Dendritic cell treated with granulocyte-macrophage colony-stimulating factor and Interleukin-4, amounts not matched to agents 40 ng/mL and 50 ng/mL, for 4 days (primary cell): ENCODE measurements at regions of chr7 and their contacts with region 1.

Region 1: GRCh38 chr7:16564909-16565426 is 38.3 kb downstream of the LRRC72 start:
- H3K4me3 Mint-ChIP-seq: no peak overlapping the region
- H3K27ac Mint-ChIP-seq: no peak overlapping the region
- H3K4me1 Mint-ChIP-seq: no peaks in the 10 kb centered on the region
- H3K27me3 Mint-ChIP-seq: no peaks in the 10 kb centered on the region

Region 2: GRCh38 chr7:15326044-15326644 is 1238.8 kb before region 1 on chr7:
- intact Hi-C with region 1: loop called (anchors 10 kb)
- H3K4me3 Mint-ChIP-seq: no peak overlapping the region
- H3K27ac Mint-ChIP-seq: no peak overlapping the region
- H3K4me1 Mint-ChIP-seq: no peaks in the 10 kb centered on the region
- H3K27me3 Mint-ChIP-seq: no peaks in the 10 kb centered on the region

Region 3: GRCh38 chr7:16055263-16055976 is 509.5 kb before region 1 on chr7:
- intact Hi-C with region 1: no loop called
- H3K4me3 Mint-ChIP-seq: no peak overlapping the region
- H3K27ac Mint-ChIP-seq: peak overlapping the region; percentile 37
- H3K4me1 Mint-ChIP-seq: peaks cover 10% of the 10 kb centered on the region
- H3K27me3 Mint-ChIP-seq: no peaks in the 10 kb centered on the region

Region 4: GRCh38 chr7:16078076-16078952 is 486.7 kb before region 1 on chr7:
- intact Hi-C with region 1: loop called (anchors 1 kb)
- H3K4me3 Mint-ChIP-seq: no peak overlapping the region
- H3K27ac Mint-ChIP-seq: no peak overlapping the region
- H3K4me1 Mint-ChIP-seq: no peaks in the 10 kb centered on the region
- H3K27me3 Mint-ChIP-seq: no peaks in the 10 kb centered on the region

Region 5: GRCh38 chr7:16431646-16432424 is 133.1 kb before region 1 on chr7:
- intact Hi-C with region 1: loop called (anchors 5 kb)
- H3K4me3 Mint-ChIP-seq: no peak overlapping the region
- H3K27ac Mint-ChIP-seq: no peak overlapping the region
- H3K4me1 Mint-ChIP-seq: peaks cover 9% of the 10 kb centered on the region
- H3K27me3 Mint-ChIP-seq: peaks cover 11% of the 10 kb centered on the region

Region 6: GRCh38 chr7:16822029-16822428 is 257.1 kb after region 1 on chr7:
- intact Hi-C with region 1: no loop called
- H3K4me3 Mint-ChIP-seq: no peak overlapping the region
- H3K27ac Mint-ChIP-seq: no peak overlapping the region
- H3K4me1 Mint-ChIP-seq: peaks cover under 1% of the 10 kb centered on the region
- H3K27me3 Mint-ChIP-seq: no peaks in the 10 kb centered on the region